Activated CD8-positive, alpha-beta T cell treated with anti-CD3 and anti-CD28 coated beads, Interleukin-2, amount 10 ng/mL, durations not matched to agents 7 days and 5 days (primary cell): ENCODE measurements at regions of chr1 and their contacts with region 1.

Region 1: DNA sequence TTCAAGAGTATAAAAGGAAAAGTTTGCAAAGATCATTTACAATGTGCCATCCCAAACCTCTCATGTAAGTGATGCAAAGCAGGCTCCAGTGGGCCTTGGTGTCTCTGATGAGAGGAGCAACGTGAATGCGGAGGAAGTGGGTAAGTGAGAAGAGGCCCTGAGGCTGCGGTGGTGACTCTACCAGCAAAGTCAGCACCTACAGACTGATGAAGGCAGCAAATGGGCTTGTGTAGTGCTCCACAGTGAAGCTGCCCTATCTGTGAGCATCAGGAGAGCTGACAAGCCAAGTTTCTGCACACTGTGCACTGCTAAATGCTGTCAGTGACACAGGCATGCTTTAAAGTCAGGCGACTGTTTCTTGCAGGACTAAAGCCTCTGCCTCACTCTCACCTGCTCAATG is 15.6 kb upstream of the RAP1A start:
- DNase-seq: peak; percentile 92
- ATAC-seq: peak; percentile 98
- H3K4me3 Mint-ChIP-seq: peak overlapping the region; percentile 40
- H3K27ac Mint-ChIP-seq: peak overlapping the region; percentile 92
- H3K4me1 Mint-ChIP-seq: peaks cover 73% of the 10 kb centered on the region
- H3K27me3 Mint-ChIP-seq: no peaks in the 10 kb centered on the region

Region 2: DNA sequence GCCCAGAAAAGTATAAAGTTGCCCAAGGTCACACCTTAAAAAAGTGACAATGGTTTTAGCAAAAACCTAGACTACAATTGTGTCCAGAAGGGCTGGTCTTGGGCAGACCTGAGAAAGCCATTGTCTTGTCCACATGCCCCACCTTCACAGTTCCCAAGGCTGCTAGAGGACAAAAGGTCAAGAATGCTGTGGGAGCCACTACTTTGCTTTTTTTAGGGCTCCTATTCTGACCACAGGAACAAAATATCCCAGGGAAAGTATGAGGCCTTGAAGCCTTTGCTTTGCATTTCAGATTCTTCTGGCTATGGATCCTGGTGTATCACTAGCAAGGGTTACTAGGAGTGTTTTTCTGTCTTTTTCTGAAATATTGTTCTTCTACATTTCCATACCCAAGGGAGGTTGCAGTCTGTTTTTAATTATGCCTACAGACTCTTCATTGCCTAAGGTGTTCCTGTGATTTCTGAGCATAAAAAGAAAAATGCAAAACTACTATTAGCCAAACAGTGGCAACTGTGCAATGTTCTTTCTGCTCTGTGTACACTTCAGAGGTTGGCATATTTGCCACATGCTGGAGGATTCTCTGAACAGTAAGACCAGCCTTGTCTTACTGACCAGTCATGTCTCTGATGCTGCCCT is 119.5 kb before region 1 on chr1:
- CTCF ChIA-PET with region 1: no interaction called
- POLR2A ChIA-PET with region 1: no interaction called
- DNase-seq: no peak
- ATAC-seq: no peak
- H3K4me3 Mint-ChIP-seq: no peak overlapping the region
- H3K27ac Mint-ChIP-seq: no peak overlapping the region
- H3K4me1 Mint-ChIP-seq: peaks cover 17% of the 10 kb centered on the region
- H3K27me3 Mint-ChIP-seq: no peaks in the 10 kb centered on the region

Region 3: GRCh38 chr1:111619635-111620440 is 15.9 kb after region 1 on chr1 and contains the start of gene RAP1A:
- CTCF ChIA-PET with region 1: interaction called, 48 read pairs
- POLR2A ChIA-PET with region 1: interaction called, 250 read pairs
- DNase-seq: peak; percentile 96
- ATAC-seq: peak; percentile 77
- H3K4me3 Mint-ChIP-seq: peak within 1 kb of the TSS; percentile 95
- H3K27ac Mint-ChIP-seq: peak within 1 kb of the TSS; percentile 92
- H3K4me1 Mint-ChIP-seq: peaks cover 69% of the 10 kb centered on the region
- H3K27me3 Mint-ChIP-seq: no peaks in the 10 kb centered on the region
- total RNA-seq, gene RAP1A: 132 to 133 TPM

Region 4: DNA sequence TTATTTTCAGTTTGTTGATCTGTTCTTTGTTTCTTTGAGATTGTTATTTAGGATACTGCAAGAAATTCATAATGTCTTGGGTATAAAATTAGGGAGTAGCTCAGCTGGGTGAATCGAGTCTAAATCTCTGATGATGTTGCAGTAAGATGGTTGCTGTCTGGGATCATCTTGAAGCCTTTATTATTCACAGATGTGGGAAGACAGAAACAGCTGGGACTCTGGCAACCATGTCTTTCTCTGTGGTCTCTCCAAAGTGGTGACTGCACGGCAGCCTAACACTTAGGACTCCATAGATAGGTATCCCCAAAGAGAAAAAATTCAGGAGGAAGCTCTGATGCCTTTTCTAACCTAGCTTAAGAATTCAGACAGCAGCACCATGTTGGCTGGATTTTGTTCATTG is 68.4 kb after region 1 on chr1:
- CTCF ChIA-PET with region 1: no interaction called
- POLR2A ChIA-PET with region 1: no interaction called
- DNase-seq: no peak
- ATAC-seq: no peak
- H3K4me3 Mint-ChIP-seq: no peak overlapping the region
- H3K27ac Mint-ChIP-seq: no peak overlapping the region
- H3K4me1 Mint-ChIP-seq: peaks cover 37% of the 10 kb centered on the region
- H3K27me3 Mint-ChIP-seq: no peaks in the 10 kb centered on the region